Astrocyte of the cerebellum (primary cell): ENCODE measurements at regions of chr2 and their contacts with region 1.

Region 1: GRCh38 chr2:158745044-158745865 is 49.9 kb upstream of the DAPL1 start:
- DNase-seq: peak; percentile 76
- H3K4me3 ChIP-seq: no peak overlapping the region
- CTCF ChIP-seq: peak; percentile 76

Region 2: DNA sequence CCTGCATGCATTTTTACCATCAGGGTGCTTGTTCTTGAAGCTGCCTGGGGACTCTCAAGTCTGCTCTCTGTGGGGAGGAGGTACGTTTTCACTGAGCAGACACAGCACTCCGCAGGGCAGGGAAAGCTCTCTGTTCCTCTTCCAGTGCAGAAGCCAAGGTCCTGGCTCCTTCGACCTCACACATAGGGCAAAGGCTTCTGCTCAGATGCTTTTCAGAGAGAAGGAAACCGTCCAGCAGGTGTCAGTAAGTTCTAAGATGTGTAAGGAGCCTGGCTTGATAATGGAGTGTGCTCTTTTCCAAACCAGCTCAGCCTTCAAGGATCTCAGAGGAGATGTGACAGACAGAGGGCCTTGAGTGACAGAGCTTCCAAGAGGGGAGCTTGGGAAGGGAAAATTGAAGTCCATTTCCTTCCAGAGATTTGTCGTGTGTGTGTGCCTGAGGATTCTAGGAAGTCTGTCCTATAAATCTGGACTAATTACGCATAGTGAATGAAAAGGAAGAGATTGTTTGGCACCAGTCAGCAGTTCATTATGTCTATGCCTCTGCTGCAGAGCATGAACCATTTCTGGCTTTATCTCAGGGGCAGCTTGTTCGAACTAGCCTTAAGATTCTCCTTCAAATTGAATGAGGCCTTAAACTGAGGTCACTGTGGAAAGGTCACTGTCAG is 710.9 kb before region 1 on chr2:
- in situ Hi-C with region 1: loop called (anchors 25 kb)
- DNase-seq: peak; percentile 42
- H3K4me3 ChIP-seq: no peak overlapping the region
- CTCF ChIP-seq: peak; percentile 62

Region 3: DNA sequence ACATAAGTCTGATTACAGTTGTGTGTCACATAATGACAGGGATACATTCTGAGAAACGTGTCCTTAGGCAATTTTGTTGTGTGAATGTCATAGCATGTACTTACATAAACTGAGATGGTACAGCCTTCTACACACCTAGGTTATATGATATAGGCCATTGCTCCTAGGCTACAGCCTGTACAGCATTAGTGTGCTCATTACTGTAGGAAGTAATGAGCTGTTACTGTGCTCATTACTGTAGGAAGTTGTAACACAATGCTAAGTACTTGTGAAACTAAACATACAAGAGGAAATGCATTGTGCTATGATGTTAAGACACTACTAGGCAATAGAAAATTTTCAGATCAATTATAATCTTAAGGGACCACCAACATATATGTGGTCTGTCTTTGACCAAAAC is 570.8 kb before region 1 on chr2:
- in situ Hi-C with region 1: loop called (anchors 5 kb)
- DNase-seq: no peak
- H3K4me3 ChIP-seq: no peak overlapping the region
- CTCF ChIP-seq: no peak

Region 4: DNA sequence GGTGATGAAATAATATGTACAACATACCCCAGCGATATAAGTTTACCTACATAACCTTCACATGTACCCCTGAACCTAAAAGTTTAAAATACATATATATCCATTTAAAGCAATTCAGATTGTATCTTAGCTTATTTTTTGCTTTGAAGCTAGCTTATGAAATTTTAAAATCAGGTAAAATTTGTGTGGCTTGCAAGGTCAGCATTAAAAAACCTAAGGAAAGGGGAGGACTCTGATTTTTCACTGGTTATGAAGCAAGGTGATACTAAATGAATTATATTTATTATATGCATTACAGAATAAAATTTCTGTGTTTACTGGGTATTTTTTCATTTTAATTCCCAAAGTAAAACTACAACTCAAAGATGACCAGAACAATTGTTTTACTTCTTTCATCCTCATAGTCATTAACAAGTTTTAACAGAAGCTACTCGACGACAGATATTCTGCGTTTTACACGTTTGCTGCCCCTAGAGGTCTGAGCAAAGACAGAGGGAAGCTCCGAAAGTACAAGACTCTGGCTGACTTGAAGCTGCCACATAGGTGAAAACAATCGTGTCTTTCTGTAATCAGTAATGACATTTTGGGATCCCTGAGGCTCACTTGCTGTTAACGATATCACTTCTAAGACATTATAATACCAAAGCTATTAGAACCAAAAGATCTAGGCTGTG is 271.4 kb before region 1 on chr2:
- in situ Hi-C with region 1: loop called (anchors 10 kb)
- DNase-seq: no peak
- H3K4me3 ChIP-seq: no peak overlapping the region
- CTCF ChIP-seq: peak; percentile 17

Region 5: DNA sequence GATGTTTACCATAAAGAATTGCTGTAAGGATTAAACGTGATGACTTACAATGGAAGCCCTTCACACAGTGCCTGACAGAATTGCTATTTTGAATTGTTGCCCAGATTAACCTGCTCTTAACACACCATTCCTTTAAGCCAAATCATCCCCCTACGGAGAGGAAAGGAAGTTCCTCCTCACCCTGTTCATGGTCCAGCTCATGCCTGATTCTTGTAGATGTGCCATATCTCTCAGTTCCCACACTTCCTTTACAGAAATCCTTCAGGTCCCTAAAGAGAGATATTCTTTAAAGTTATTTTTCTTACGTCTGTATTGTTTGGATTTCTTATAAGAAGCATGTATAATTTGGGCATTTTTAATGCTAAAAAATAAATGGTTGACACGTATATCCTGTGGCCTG is 77.7 kb before region 1 on chr2:
- in situ Hi-C with region 1: no loop called
- DNase-seq: peak; percentile 77
- H3K4me3 ChIP-seq: no peak overlapping the region
- CTCF ChIP-seq: peak; percentile 6